Activated CD4-positive, alpha-beta memory T cell treated with anti-CD3 and anti-CD28 coated beads for 36 hours (primary cell): ENCODE measurements at regions of chr19 and their contacts with region 1.

Region 1: GRCh38 chr19:50376166-50377050 is at the start of gene NR1H2:
- DNase-seq: peak; percentile 96
- H3K4me3 Mint-ChIP-seq: peak within 1 kb of the TSS; percentile 91
- H3K27ac Mint-ChIP-seq: peak within 1 kb of the TSS; percentile 98
- H3K4me1 Mint-ChIP-seq: peaks cover 21% of the 10 kb centered on the region
- H3K27me3 Mint-ChIP-seq: no peaks in the 10 kb centered on the region
- total RNA-seq, gene NR1H2: 73.9 to 75.6 TPM

Region 2: GRCh38 chr19:50476224-50476942 is 100.0 kb after region 1 on chr19 and contains the starts of genes EMC10 and GARIN5A:
- CTCF ChIA-PET with region 1: no interaction called
- POLR2A ChIA-PET with region 1: no interaction called
- intact Hi-C with region 1: loop called (anchors 2 kb)
- DNase-seq: peak; percentile 97
- H3K4me3 Mint-ChIP-seq: peak within 1 kb of the TSS; percentile 93
- H3K27ac Mint-ChIP-seq: peak within 1 kb of the TSS; percentile 88
- H3K4me1 Mint-ChIP-seq: peaks cover 22% of the 10 kb centered on the region
- H3K27me3 Mint-ChIP-seq: no peaks in the 10 kb centered on the region
- total RNA-seq, gene EMC10: 37.5 to 37.6 TPM
- total RNA-seq, gene GARIN5A: 0.77 to 0.88 TPM